ENCODE measurements at regions of chr2 and their contacts with region 1.

Region 1: DNA sequence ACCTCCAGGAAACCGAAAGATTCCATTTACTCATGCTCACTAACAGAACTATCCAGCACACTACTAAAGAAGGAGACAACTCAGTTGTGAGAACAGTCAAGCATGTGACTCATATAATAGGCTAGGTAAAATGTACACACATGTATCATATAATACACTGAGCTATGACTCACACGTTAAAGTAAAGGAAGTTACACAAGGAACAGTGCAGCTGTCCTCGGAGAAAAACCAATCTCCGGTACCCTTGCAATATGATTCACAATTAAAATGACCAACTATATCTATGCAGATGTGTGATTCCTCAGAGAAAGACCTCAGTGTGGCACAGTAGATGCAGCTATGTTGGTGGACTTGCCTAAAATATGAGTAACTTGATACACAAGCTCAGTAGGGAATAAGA is 76.5 kb downstream of the STRN start:
- DNase-seq: no peak
- H3K4me3 Mint-ChIP-seq: no peak overlapping the region
- H3K27ac Mint-ChIP-seq: peak overlapping the region; percentile 49
- H3K4me1 Mint-ChIP-seq: peaks cover 8% of the 10 kb centered on the region
- H3K27me3 Mint-ChIP-seq: no peaks in the 10 kb centered on the region

Region 2: DNA sequence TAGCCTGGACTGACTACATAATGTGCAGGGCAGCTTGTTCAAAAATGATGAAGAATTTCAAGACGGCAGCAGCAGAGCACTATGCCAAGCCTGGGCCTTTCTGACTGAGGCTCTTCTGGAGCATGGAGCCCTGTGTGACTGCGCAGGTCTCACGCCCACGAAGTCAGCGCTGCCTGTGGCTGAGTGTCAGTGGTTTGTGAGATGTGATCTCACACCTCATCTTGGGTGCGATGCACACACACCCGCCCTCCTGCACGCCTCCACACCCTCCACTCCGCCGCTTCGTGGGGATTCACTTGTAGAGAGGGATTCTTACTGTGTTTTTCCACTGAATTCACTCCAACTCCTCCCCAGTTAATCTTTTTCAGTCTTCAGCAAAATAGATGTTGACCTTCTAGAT is 89.4 kb before region 1 on chr2:
- intact Hi-C with region 1: loop called (anchors 5 kb)
- DNase-seq: no peak
- H3K4me3 Mint-ChIP-seq: no peak overlapping the region
- H3K27ac Mint-ChIP-seq: peak overlapping the region; percentile 52
- H3K4me1 Mint-ChIP-seq: peaks cover 17% of the 10 kb centered on the region
- H3K27me3 Mint-ChIP-seq: peaks cover 8% of the 10 kb centered on the region

Region 3: GRCh38 chr2:36993841-36994620 is 104.2 kb after region 1 on chr2:
- intact Hi-C with region 1: no loop called
- DNase-seq: no peak
- H3K4me3 Mint-ChIP-seq: no peak overlapping the region
- H3K27ac Mint-ChIP-seq: no peak overlapping the region
- H3K4me1 Mint-ChIP-seq: no peaks in the 10 kb centered on the region
- H3K27me3 Mint-ChIP-seq: no peaks in the 10 kb centered on the region

Measured in activated T-helper 1 cell treated with anti-CD3 and anti-CD28 coated beads, Interleukin-12 subunit alpha, Interleukin-12 subunit beta, Interleukin-2, Interleukin-4 antibody, amounts not matched to agents 30 ng/mL and 10 ng/mL and 1 ng/mL, durations not matched to agents 14 hours and 24 hours and 36 hours (primary cell).